ENCODE measurements at regions of chr20 and their contacts with region 1.

Region 1: GRCh38 chr20:41136680-41137613 is at the start of gene PLCG1:
- DNase-seq: peak; percentile 86
- H3K4me3 Mint-ChIP-seq: peak within 1 kb of the TSS; percentile 85
- H3K27ac Mint-ChIP-seq: peak within 1 kb of the TSS; percentile 94
- H3K4me1 Mint-ChIP-seq: peaks cover 63% of the 10 kb centered on the region
- H3K27me3 Mint-ChIP-seq: no peaks in the 10 kb centered on the region
- total RNA-seq, gene PLCG1: 117 to 136 TPM

Region 2: GRCh38 chr20:40442181-40442963 is 694.6 kb before region 1 on chr20:
- CTCF ChIA-PET with region 1: no interaction called
- intact Hi-C with region 1: no loop called
- DNase-seq: no peak
- H3K4me3 Mint-ChIP-seq: no peak overlapping the region
- H3K27ac Mint-ChIP-seq: no peak overlapping the region
- H3K4me1 Mint-ChIP-seq: no peaks in the 10 kb centered on the region
- H3K27me3 Mint-ChIP-seq: peaks cover 2% of the 10 kb centered on the region

Region 3: GRCh38 chr20:41057999-41058896 is 78.7 kb before region 1 on chr20:
- CTCF ChIA-PET with region 1: no interaction called
- intact Hi-C with region 1: no loop called
- DNase-seq: peak; percentile 56
- H3K4me3 Mint-ChIP-seq: no peak overlapping the region
- H3K27ac Mint-ChIP-seq: peak overlapping the region; percentile 54
- H3K4me1 Mint-ChIP-seq: peaks cover 52% of the 10 kb centered on the region
- H3K27me3 Mint-ChIP-seq: no peaks in the 10 kb centered on the region

Region 4: GRCh38 chr20:41095110-41095969 is 41.6 kb before region 1 on chr20:
- CTCF ChIA-PET with region 1: interaction called, 3 read pairs
- intact Hi-C with region 1: loop called (anchors 2 kb)
- DNase-seq: peak; percentile 70
- H3K4me3 Mint-ChIP-seq: no peak overlapping the region
- H3K27ac Mint-ChIP-seq: peak overlapping the region; percentile 61
- H3K4me1 Mint-ChIP-seq: peaks cover 14% of the 10 kb centered on the region
- H3K27me3 Mint-ChIP-seq: no peaks in the 10 kb centered on the region

Region 5: GRCh38 chr20:41155261-41155660 is 18.3 kb after region 1 on chr20:
- CTCF ChIA-PET with region 1: interaction called, 77 read pairs
- intact Hi-C with region 1: loop called (anchors 1 kb)
- DNase-seq: no peak
- H3K4me3 Mint-ChIP-seq: no peak overlapping the region
- H3K27ac Mint-ChIP-seq: peak overlapping the region; percentile 94
- H3K4me1 Mint-ChIP-seq: peaks cover 95% of the 10 kb centered on the region
- H3K27me3 Mint-ChIP-seq: no peaks in the 10 kb centered on the region

Region 6: GRCh38 chr20:41224281-41224680 is 87.3 kb after region 1 on chr20:
- CTCF ChIA-PET with region 1: interaction called, 12 read pairs
- intact Hi-C with region 1: no loop called
- DNase-seq: no peak
- H3K4me3 Mint-ChIP-seq: no peak overlapping the region
- H3K27ac Mint-ChIP-seq: no peak overlapping the region
- H3K4me1 Mint-ChIP-seq: peaks cover 5% of the 10 kb centered on the region
- H3K27me3 Mint-ChIP-seq: no peaks in the 10 kb centered on the region

Region 7: GRCh38 chr20:41329435-41330342 is 192.7 kb after region 1 on chr20:
- CTCF ChIA-PET with region 1: interaction called, 14 read pairs
- intact Hi-C with region 1: no loop called
- DNase-seq: peak; percentile 82
- H3K4me3 Mint-ChIP-seq: peak overlapping the region; percentile 3
- H3K27ac Mint-ChIP-seq: peak overlapping the region; percentile 25
- H3K4me1 Mint-ChIP-seq: peaks cover 11% of the 10 kb centered on the region
- H3K27me3 Mint-ChIP-seq: no peaks in the 10 kb centered on the region

Region 8: DNA sequence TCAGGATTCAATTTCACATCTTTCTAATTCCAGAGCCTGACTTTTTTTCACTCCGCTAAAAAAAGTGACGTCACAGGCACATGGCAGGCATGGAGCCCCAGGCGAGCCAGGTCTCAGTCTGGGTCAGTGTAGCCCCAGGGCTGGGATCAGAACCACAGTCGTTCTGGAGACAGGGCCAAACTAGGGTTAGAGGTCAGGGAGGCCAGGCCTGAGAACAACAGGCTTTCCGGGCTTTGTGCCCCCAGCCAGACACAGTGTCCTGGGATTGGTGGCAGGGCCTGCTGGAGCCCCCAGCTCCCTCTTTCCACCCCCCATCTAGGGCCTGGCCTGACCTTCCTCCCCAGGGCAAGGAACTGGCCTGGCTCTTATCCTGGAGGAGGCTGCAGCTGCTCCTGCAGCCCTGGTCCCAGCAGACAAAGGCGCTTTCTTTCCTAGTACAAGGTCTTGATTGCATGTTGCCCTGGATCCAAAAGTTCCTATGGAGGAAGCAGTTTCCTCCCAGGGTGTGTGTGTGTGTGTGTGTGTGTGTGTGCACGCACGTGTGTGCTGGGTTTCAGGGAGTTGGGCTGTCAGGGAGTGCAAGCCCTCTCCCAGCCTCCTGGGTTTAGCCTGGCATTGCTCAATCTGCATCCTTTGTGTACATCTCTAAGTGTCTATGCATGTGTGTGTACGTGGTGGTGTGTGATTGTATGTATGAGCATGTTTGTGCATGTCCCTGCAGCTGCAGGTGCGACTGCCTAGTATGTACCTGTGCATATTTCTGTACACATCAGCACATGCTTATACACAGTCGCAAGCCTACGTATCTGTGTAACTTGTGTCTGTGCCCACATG is 256.1 kb after region 1 on chr20:
- CTCF ChIA-PET with region 1: no interaction called
- intact Hi-C with region 1: no loop called
- DNase-seq: no peak
- H3K4me3 Mint-ChIP-seq: no peak overlapping the region
- H3K27ac Mint-ChIP-seq: no peak overlapping the region
- H3K4me1 Mint-ChIP-seq: no peaks in the 10 kb centered on the region
- H3K27me3 Mint-ChIP-seq: no peaks in the 10 kb centered on the region

Region 9: DNA sequence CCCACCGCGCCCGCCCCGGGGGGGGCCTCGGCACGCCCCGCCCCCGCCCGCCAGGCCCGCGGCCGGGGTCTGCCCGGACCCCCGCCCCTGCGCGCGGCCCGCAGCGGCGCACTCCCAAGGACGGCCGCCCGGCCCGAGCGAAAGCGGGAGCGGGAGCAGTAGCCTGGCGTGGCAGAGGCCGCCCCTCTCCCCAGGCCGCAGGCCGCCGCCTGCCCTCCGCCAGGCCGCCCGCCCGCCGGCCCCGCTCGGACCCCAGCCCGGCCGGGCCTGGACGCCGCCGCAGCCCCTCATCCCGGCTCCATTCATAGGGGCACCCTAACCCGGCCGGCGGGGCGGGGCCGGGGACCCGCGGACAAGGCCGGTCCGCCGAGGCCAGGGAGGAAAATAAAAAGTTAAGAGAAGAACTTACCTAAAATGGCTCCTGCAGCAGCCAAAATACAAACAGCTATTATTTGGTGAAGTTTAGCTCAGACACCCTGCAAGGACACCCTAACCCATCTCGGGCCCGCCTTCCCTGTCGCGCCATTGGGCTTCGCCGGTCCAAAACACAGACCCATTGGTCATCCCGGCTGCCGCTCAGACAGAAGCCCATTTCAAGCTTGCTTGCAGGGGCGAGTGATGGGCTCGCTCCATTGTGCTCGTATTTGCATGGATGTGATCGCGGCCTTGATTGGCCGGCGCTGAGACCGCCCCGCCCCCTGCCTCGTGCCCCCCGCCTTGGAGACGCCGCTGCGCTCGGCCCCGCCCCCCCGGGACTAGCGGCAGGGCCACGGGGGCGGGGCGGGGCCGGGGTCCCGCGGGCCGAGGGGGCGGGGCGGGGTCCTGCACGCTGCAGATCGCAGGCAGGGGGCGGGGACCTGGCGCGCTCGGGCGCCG is 481.2 kb after region 1 on chr20 and contains the start of gene CHD6:
- CTCF ChIA-PET with region 1: no interaction called
- intact Hi-C with region 1: loop called (anchors 5 kb)
- DNase-seq: peak; percentile 100
- H3K4me3 Mint-ChIP-seq: peak within 1 kb of the TSS; percentile 85
- H3K27ac Mint-ChIP-seq: peak within 1 kb of the TSS; percentile 68
- H3K4me1 Mint-ChIP-seq: peaks cover 39% of the 10 kb centered on the region
- H3K27me3 Mint-ChIP-seq: no peaks in the 10 kb centered on the region
- total RNA-seq, gene CHD6: 30.1 to 31.8 TPM

Measured in activated naive CD4-positive, alpha-beta T cell treated with anti-CD3 and anti-CD28 coated beads for 36 hours (primary cell).